ENCODE measurements at regions of chr1 and their contacts with region 1.

Region 1: DNA sequence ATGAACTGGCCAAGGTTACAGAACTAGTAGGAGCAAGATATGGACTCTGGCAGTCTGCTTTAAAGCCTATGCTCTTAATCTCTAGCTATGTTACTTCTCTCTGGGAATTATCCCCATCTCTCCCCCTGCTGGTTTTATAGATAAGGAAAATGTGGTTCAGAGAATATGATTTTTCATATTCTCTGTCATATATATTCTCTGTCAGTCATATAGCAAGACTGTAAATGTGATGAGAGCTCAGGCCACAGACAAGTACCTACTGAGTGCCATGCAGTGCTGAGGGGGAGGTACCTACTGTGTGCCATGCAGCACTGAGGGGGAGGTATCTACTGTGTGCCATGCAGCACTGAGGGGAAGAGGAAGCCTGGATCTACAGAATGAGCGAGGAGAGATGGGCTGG is 220.3 kb upstream of the FGGY start:
- DNase-seq: peak; percentile 33
- ATAC-seq: peak; percentile 74
- H3K4me3 ChIP-seq: no peak overlapping the region
- H3K27ac ChIP-seq: no peak overlapping the region
- H3K4me1 ChIP-seq: no peaks in the 10 kb centered on the region
- H3K27me3 ChIP-seq: no peaks in the 10 kb centered on the region
- CTCF ChIP-seq: peak; percentile 53

Region 2: DNA sequence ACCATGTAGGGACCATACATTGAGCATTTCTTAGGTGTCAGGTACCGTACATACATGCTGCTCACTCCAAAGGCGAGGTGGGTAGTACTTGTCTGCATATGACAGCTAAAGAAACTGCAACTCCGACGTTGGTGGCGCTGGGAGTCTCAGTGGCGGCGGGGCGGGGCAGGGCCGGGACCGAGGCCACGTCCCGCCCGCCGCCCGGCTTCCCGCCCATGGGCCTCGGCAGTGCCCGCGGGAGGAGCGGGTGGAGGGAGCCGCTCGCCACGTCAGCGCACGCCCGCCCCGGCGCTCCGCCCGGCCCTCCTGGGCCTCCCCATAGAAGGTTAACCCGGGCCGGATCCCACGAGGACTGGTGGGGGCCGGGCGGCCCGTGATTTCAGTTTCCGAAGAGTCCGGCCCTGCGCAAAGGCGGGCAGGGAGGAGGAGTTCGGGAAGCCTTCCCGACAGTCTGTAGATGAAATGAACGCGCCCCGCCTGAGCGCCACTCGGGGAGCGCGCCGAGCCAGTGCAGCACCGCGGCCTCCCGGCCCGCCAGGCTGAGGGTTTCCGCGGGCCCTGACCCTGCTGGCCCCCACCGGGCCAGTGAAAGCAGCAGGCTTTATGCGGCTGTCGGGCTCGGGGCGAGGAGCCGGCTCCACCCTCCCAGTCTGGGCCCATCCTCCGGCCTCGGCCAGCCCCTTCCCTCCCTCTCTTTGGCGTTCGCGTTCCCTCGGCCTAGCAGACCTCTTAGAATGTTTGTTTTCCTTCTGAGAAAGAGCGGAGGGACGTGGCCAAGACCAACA is 172.9 kb before region 1 on chr1:
- CTCF ChIA-PET with region 1: no interaction called
- POLR2A ChIA-PET with region 1: no interaction called
- intact Hi-C with region 1: loop called (anchors 10 kb)
- DNase-seq: peak; percentile 87
- ATAC-seq: peak; percentile 86
- H3K4me3 ChIP-seq: peak overlapping the region; percentile 78
- H3K27ac ChIP-seq: peak overlapping the region; percentile 92
- H3K4me1 ChIP-seq: peaks cover 30% of the 10 kb centered on the region
- H3K27me3 ChIP-seq: no peaks in the 10 kb centered on the region
- CTCF ChIP-seq: no peak

Region 3: DNA sequence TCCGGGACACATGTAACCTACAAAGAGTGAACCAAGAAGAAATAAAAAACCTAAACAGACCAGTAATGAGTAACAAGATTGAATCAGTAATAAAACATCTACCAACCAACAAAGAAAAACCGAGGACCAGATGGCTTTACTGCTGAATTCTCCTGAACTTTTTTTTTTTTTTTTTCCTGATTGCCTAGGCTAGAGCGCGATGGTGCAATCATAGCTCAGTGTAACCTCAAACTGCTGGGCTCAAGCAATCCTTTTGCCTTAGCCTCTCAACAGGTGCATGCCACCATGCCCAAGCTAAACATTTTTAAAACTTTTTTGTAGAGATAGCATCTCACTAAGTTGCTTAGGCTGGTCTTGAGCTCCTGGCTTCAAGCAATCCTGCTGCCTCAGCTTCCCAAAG is 209.1 kb after region 1 on chr1:
- CTCF ChIA-PET with region 1: no interaction called
- POLR2A ChIA-PET with region 1: no interaction called
- intact Hi-C with region 1: loop called (anchors 10 kb)
- DNase-seq: no peak
- ATAC-seq: no peak
- H3K4me3 ChIP-seq: no peak overlapping the region
- H3K27ac ChIP-seq: no peak overlapping the region
- H3K4me1 ChIP-seq: no peaks in the 10 kb centered on the region
- H3K27me3 ChIP-seq: no peaks in the 10 kb centered on the region
- CTCF ChIP-seq: no peak